ENCODE measurements at regions of chr3 and their contacts with region 1.

Region 1: DNA sequence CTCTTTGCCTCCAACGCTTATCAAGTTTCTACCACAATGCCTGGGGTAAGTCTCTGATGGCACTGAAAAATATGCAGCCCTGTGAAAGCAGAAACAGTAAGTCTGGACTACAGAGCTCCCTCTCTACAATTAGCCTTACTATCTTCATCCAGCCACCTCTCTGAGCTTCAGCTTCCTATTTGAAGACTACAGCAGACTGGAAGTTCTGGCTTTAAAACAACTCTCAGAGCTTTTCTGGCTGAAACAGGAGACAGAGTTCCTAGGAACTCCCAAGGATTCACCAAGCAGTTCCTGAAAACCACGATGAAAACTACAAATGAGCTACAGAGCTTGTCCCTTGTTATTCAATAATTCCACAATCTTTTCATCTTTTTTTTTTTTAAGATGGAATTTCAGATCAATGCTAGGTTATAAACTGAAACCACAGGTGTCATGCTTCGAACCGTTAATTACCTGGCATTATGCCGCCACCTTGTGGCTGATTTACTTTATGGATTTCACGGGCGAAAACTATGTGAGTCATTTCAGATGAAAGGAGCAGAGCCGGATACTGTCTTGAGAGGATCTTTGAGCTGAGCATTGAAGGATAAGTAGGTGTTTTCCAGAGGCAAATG is 3.9 kb downstream of the CRYGS start:
- DNase-seq: peak; percentile 70
- ATAC-seq: peak; percentile 92
- H3K4me3 ChIP-seq: no peak overlapping the region
- H3K27ac ChIP-seq: no peak overlapping the region
- H3K4me1 ChIP-seq: peaks cover 18% of the 10 kb centered on the region
- H3K27me3 ChIP-seq: no peaks in the 10 kb centered on the region
- CTCF ChIP-seq: peak; percentile 86
- EP300 ChIP-seq: no peak
- POLR2A ChIP-seq: no peak
- RAD21 ChIP-seq: 0 out of 2 replicates have a peak, but pooled peaks have one; percentile 40

Region 2: DNA sequence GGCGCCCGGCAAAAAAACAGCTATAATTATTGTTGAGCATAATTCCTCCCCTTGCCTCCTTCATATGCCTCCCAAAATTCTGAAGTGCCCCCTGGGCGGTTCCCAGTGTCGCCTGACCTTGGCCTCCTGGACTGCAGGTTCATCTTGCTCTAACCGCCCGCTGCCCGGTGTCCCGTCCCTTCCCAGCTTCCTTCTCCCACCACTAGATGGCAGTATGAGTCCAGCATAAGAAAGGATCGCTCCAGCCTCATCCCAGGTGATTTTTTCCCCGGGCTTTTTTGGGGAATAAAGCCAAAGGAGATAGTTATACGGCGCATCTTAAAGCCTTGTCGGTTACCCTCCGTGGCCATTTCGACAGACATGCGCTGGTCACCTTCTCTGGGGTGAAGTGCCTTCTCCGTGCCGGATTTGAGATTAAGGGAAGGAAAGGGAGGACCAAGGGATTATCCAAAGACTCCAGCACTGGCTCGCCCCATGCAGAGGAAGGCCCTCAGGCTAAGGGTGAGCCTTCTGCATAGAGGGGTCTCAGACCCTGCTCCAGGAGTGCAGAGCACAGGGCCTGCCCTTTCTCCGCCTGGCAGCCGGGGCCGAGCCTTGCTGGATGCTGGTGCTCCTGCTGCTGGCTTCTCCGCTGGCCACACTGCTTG is 556.7 kb before region 1 on chr3:
- CTCF ChIA-PET with region 1: interaction called, 7 read pairs
- POLR2A ChIA-PET with region 1: no interaction called
- in situ Hi-C with region 1: loop called (anchors 5 kb)
- intact Hi-C with region 1: loop called (anchors 2 kb)
- DNase-seq: peak; percentile 65
- ATAC-seq: peak; percentile 91
- H3K4me3 ChIP-seq: no peak overlapping the region
- H3K27ac ChIP-seq: no peak overlapping the region
- H3K4me1 ChIP-seq: peaks cover 41% of the 10 kb centered on the region
- H3K27me3 ChIP-seq: no peaks in the 10 kb centered on the region
- CTCF ChIP-seq: peak; percentile 90
- EP300 ChIP-seq: no peak
- POLR2A ChIP-seq: no peak
- RAD21 ChIP-seq: peak; percentile 89

Region 3: GRCh38 chr3:186259612-186260383 is 280.5 kb before region 1 on chr3:
- CTCF ChIA-PET with region 1: interaction called, 27 read pairs
- POLR2A ChIA-PET with region 1: interaction called, 3 read pairs
- in situ Hi-C with region 1: loop called (anchors 5 kb)
- intact Hi-C with region 1: loop called (anchors 1 kb)
- DNase-seq: peak; percentile 57
- ATAC-seq: peak; percentile 100
- H3K4me3 ChIP-seq: peak overlapping the region in 1 of 3 experiments; percentile 14; a peak in 1 of 6 replicates
- H3K27ac ChIP-seq: no peak overlapping the region
- H3K4me1 ChIP-seq: peaks cover 6% of the 10 kb centered on the region; the same call in 1 of the 2 replicates
- H3K27me3 ChIP-seq: peaks cover 0 to 1% of the 10 kb centered on the region in 2 experiments; a peak in 1 of 5 replicates
- CTCF ChIP-seq: peak; percentile 94
- EP300 ChIP-seq: no peak
- POLR2A ChIP-seq: no peak
- RAD21 ChIP-seq: peak; percentile 93

Region 4: DNA sequence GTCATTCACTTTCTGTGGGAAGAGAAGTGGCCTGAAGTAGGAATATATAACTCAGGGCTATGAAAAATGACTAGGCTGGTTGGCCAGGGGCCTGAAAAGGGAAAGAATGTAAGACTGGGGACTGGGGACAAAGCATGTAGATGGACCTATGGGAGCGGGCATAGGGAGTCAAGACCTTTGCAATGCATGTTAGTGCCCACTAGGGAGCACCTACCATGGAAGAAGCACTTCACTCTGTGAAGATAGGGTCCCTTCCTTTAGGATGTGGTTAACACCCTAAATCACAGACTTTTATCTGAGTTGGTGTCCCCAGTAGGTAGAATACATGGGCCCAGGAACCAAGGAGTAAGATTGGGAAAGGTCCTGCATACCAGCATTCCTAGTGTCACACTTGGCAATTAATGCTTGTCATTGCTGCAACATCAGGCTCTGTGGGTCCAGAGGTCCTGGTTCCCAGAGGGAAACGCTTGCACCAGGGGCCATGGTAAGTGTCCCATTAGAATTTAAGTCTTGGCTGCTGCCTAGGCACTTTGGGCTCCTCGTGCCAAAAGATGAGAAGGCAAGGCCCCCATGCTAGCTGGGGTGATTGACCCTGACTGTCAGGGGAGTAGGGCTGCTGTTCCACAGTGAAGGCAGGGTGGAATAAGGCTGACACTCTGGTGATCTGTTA is 75.8 kb before region 1 on chr3:
- CTCF ChIA-PET with region 1: interaction called, 4 read pairs
- POLR2A ChIA-PET with region 1: no interaction called
- in situ Hi-C with region 1: no loop called
- intact Hi-C with region 1: loop called (anchors 1 kb)
- DNase-seq: peak; percentile 16
- ATAC-seq: peak; percentile 90
- H3K4me3 ChIP-seq: no peak overlapping the region
- H3K27ac ChIP-seq: no peak overlapping the region
- H3K4me1 ChIP-seq: no peaks in the 10 kb centered on the region
- H3K27me3 ChIP-seq: peaks cover 0 to 7% of the 10 kb centered on the region in 2 experiments; a peak in 1 of 5 replicates
- CTCF ChIP-seq: peak; percentile 44
- EP300 ChIP-seq: no peak
- POLR2A ChIP-seq: no peak
- RAD21 ChIP-seq: no peak